ENCODE measurements at regions of chr4 and their contacts with region 1.

Region 1: GRCh38 chr4:127732613-127733328 is 2.6 kb downstream of the SLC25A31 start:
- DNase-seq: no peak
- H3K4me3 ChIP-seq: no peak overlapping the region
- CTCF ChIP-seq: no peak
- POLR2A ChIP-seq: no peak

Region 2: DNA sequence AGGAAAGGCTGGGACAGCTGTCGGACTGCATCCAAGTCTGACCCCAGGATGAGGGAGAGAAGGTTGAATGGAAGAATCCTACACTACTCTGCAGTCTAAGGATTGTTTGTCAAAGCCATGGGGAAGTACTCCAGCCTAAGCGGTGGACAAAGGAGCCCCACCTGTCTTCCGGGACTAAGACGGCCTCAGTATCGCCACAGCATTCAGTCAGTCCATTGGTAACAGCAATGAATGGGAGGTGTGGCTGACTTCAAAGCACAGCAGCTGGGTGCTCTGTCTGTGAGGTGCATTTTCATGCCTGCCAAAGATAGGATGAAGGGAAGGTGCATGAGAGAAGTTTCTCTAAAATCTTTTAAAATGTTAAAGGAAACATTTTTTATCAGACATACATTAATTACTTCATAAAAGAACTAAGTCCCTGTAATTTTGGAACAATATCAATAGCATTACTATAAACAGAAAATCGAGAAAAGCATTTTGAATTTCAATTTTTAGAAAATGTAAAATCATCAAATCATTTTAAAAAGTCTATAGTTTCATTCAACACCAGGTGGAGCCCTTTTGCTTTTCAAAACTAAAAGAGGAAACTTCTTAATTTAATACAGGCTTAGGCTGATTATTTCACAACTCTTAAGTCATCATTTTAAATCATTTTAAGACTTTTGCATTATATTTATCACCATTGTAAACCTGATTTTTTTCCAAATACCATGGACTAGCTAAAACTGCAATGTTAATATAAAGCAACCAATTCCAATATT is 127.6 kb before region 1 on chr4:
- intact Hi-C with region 1: loop called (anchors 5 kb)
- DNase-seq: no peak
- H3K4me3 ChIP-seq: no peak overlapping the region
- CTCF ChIP-seq: no peak
- POLR2A ChIP-seq: no peak

Measured in lower leg skin (tissue), 4 donors.